PC-3 (cell line): ENCODE measurements at regions of chr5 and their contacts with region 1.

Region 1: GRCh38 chr5:142151436-142152383 is 43.1 kb downstream of the NDFIP1 start:
- DNase-seq: peak; percentile 64
- ATAC-seq: peak; percentile 70
- H3K4me3 ChIP-seq: no peak overlapping the region
- H3K27ac ChIP-seq: no peak overlapping the region
- H3K4me1 ChIP-seq: peaks cover 13% of the 10 kb centered on the region
- H3K27me3 ChIP-seq: no peaks in the 10 kb centered on the region
- CTCF ChIP-seq: peak; percentile 87

Region 2: GRCh38 chr5:142186857-142187594 is 35.3 kb after region 1 on chr5:
- CTCF ChIA-PET with region 1: no interaction called
- POLR2A ChIA-PET with region 1: interaction called, 11 read pairs
- intact Hi-C with region 1: loop called (anchors 2 kb)
- DNase-seq: peak; percentile 48
- ATAC-seq: peak; percentile 54
- H3K4me3 ChIP-seq: no peak overlapping the region
- H3K27ac ChIP-seq: no peak overlapping the region; the same call in 1 of the 2 replicates
- H3K4me1 ChIP-seq: peaks cover 7% of the 10 kb centered on the region
- H3K27me3 ChIP-seq: no peaks in the 10 kb centered on the region
- CTCF ChIP-seq: no peak

Region 3: DNA sequence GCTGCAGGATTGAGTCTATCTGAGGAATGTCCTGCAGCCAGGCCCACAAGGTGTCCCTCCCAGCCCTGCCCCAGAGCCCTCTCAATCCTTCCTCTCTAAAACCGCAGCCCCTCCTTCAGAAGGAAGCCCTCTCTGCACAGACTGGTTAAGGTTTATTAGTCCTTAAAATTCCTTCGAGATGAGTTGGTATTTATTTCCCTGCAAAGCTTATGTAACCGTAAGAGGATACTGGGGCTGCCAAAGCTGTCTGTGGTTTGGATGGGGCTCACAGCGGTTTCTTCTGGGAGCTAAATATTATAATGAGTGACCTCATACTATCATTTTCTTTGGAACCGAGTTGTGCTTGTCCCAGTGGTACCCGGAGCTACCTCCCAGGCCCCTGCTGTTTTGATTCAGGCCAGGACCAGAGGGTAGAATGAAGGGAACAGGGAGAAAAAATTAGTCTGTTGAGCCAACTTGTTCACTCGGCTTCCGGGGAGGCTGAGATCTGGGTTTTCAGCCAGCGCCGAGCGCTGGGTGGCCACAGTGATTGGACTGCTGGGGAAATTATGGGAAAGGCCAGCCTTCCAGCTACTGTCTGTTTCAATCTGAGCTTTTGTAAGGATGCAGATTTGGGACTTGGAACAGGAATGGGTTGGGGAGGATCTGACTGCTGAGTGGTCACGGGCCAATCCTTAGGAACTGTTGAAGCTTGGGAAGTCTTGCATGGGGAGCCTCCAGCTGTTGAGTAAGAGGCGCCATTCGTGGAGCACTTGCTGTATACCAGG is 64.4 kb after region 1 on chr5:
- CTCF ChIA-PET with region 1: interaction called, 4 read pairs
- POLR2A ChIA-PET with region 1: no interaction called
- intact Hi-C with region 1: loop called (anchors 1 kb)
- DNase-seq: peak; percentile 97
- ATAC-seq: peak; percentile 95
- H3K4me3 ChIP-seq: peak overlapping the region; percentile 43; the same call in 1 of the 2 replicates
- H3K27ac ChIP-seq: peak overlapping the region; percentile 91
- H3K4me1 ChIP-seq: peaks cover 38% of the 10 kb centered on the region
- H3K27me3 ChIP-seq: no peaks in the 10 kb centered on the region
- CTCF ChIP-seq: no peak

Region 4: GRCh38 chr5:142307146-142307890 is 155.6 kb after region 1 on chr5:
- CTCF ChIA-PET with region 1: interaction called, 7 read pairs
- POLR2A ChIA-PET with region 1: interaction called, 3 read pairs
- intact Hi-C with region 1: loop called (anchors 1 kb)
- DNase-seq: no peak
- ATAC-seq: peak; percentile 6
- H3K4me3 ChIP-seq: no peak overlapping the region
- H3K27ac ChIP-seq: 0 out of 2 replicates have a peak overlapping the region, but pooled peaks have one; percentile 9
- H3K4me1 ChIP-seq: no peaks in the 10 kb centered on the region
- H3K27me3 ChIP-seq: no peaks in the 10 kb centered on the region
- CTCF ChIP-seq: no peak

Region 5: DNA sequence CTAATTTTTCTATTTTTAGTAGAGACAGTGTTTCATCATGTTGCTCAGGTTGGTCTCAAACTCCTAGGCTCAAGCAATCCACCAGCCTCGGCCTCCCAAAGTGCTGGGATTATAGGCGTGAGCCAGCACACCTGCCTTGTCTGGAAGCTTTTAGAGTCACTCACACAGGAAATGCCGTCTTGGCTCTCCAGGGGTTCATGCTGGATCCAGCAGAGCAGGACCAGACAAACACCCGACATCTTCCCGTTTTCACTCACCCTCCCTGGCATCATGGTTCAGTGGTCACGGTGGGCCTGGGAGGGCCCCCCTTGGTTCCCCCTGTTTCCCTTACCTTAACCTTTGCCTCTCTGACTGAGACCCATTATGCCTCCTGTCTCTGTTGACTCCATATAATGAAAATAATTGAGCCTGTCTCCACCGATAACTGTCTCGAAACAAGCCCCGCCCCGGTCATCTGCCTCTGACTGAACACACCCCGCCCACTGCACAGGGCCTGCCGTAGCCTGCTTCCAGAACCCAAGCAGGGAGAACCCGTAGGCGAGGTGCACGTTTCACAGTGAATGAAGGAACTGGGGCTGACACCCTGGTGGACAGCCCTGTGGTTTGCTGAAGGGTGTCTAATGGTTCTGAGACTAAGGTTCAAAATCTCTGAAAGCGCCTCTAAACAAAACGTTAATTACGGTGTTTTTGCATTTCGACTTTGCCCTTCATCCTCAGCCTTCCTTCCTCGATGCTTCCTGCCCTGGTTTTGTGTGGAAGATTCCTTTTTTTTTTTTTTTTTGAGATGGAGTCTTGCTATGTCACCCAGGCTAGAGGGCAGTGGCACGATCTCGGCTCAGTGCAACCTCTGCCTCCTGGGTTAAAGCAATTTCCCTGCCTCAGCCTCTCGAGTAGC is 212.8 kb after region 1 on chr5:
- CTCF ChIA-PET with region 1: no interaction called
- POLR2A ChIA-PET with region 1: no interaction called
- intact Hi-C with region 1: loop called (anchors 5 kb)
- DNase-seq: no peak
- ATAC-seq: no peak
- H3K4me3 ChIP-seq: no peak overlapping the region
- H3K27ac ChIP-seq: no peak overlapping the region
- H3K4me1 ChIP-seq: peaks cover 20% of the 10 kb centered on the region
- H3K27me3 ChIP-seq: no peaks in the 10 kb centered on the region
- CTCF ChIP-seq: no peak

Region 6: DNA sequence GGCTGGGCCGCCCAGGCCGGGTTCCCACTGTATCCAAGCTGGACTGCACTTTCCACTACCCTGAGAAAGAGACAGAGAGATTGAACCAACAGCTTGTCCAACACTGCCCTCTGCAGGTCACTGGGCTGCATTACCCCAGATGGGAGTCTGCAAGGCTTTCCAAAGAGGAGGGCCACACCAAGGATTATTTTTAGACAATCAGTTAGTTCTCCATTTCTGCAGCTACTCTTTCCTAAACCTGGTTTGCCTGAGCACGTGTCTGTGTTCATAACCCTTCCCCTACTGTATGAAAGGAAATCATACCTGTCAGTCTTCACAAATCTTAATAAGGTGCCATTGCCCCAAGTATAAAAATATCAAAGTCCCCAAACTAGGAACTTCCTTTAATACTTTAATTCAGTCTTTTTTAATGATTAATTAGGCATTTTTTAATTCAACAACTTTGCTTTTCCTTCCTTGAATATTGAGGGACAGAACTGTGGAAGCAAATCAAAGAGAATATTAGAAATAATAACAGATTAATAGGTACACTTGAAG is 547.5 kb after region 1 on chr5:
- CTCF ChIA-PET with region 1: no interaction called
- POLR2A ChIA-PET with region 1: no interaction called
- intact Hi-C with region 1: loop called (anchors 2 kb)
- DNase-seq: peak; percentile 92
- ATAC-seq: peak; percentile 99
- H3K4me3 ChIP-seq: no peak overlapping the region
- H3K27ac ChIP-seq: no peak overlapping the region
- H3K4me1 ChIP-seq: peaks cover 15% of the 10 kb centered on the region
- H3K27me3 ChIP-seq: no peaks in the 10 kb centered on the region
- CTCF ChIP-seq: peak; percentile 88